Activated T-helper 1 cell treated with anti-CD3 and anti-CD28 coated beads, Interleukin-12 subunit alpha, Interleukin-12 subunit beta, Interleukin-2, Interleukin-4 antibody, amounts not matched to agents 30 ng/mL and 10 ng/mL and 1 ng/mL, durations not matched to agents 14 hours and 24 hours and 36 hours (primary cell): ENCODE measurements at regions of chr16 and their contacts with region 1.

Region 1: DNA sequence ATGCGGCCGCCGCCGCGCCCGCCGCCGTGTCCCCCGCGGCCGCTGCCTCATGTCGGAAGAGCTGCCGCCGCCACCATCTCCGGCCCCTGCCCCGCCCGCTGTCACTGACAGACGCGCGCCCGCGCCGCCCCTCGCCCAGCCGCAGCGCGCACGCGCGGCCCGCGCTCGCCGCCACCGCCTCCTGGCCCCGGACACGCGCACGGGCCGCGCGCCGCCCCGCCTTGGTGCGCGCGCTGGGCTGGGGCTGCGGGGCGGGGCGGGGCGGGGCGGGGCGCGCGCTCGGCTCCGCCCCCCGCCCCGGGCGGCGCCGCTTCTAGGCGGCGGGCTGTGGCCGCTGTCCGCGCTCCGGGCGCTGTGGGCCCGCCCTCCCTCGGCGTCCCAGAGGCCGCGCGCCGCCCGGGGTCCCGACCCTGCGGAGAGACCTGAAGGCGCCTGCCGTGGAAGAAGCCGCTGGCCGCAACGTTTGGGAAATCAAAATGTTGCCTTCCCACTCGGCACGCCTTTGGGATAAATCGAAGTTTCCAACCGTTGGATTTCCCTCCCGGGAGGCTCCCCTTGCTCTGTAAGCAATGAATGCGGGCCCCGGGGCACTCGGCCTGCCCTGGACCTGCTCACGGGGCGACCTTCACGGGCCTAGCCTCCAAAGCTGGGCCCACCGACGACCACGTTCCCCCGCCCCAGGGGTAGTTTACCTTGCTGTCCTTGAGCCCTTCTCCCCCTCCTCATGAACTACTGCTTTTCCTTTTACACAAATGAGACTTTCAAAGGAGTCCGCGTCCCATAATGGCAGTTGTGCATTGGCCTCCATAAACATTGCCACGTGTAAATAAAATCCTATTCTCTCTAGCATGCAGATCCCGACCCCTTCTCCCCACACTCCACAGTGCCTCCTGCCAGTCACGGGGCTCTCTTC is at the start of gene ADCY9:
- DNase-seq: peak; percentile 84
- H3K4me3 Mint-ChIP-seq: peak within 1 kb of the TSS; percentile 82
- H3K27ac Mint-ChIP-seq: peak within 1 kb of the TSS; percentile 64
- H3K4me1 Mint-ChIP-seq: peaks cover 41% of the 10 kb centered on the region
- H3K27me3 Mint-ChIP-seq: peaks cover 14% of the 10 kb centered on the region
- total RNA-seq, gene ADCY9: 9.4 and 9.7 TPM in 2 replicates

Region 2: DNA sequence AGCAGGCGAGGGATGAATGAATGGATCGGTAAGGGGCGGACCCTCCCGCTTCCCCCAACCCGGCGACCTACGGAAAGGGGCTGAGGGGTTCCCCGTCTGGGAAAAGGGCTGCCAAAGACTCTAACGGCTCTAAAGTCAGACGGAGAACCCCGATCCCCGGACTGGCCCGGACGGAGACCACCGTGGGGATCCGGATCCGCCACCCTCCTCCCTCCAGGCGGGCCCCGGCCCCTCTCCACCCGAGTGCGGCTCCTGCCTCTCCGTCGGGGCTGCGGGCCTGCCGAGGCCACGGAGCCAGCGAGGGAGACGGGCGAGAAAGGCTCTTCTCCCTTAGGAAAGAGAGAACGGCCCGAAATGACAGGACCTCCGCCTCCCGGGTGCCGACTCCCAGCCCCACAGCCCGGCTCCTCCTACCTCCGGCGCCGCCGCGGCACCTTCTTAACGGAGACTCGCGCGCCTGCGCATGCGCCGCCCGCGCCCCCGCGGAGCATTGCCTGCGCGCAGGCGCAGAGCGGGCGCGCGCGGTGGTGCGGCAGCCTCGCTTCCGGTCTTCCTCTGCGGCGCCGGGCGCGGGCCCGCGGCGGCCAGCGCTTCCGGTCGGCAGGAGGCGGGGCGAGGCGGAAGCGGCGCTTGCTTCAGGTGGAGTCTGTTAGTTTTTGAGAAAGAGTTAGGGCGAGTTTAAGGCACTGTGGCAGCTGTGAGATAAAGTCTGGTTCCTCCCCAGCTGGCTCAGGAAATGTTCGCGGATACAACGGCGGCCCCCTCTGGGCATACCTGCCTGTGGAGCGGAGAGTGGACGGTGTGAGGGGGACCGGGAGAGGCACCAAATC is 505.2 kb before region 1 on chr16 and contains the start of gene SLX4:
- intact Hi-C with region 1: loop called (anchors 1 kb)
- DNase-seq: peak; percentile 93
- H3K4me3 Mint-ChIP-seq: peak within 1 kb of the TSS; percentile 98
- H3K27ac Mint-ChIP-seq: peak within 1 kb of the TSS; percentile 97
- H3K4me1 Mint-ChIP-seq: peaks cover 52% of the 10 kb centered on the region
- H3K27me3 Mint-ChIP-seq: no peaks in the 10 kb centered on the region
- total RNA-seq, gene SLX4: 10.3 and 10.8 TPM in 2 replicates

Region 3: DNA sequence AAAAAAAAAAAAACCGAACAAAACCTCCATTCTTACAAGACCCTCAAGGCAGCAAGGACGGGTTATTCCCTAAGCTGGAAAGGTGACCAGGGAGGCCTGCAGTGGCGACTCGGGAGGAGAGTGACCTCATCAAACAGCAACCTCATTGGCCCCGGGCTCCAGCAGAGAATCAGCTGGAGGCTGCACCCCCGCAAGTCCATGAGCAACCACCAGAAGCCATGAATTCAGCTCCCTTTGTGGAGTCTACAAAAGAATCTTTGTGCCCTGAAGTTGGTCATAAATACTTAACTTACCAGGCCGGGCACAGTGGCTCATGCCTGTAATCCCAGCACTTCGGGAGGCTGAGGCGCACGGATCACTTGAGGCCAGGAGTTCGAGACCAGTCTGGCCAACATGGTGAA is 155.1 kb before region 1 on chr16:
- intact Hi-C with region 1: loop called (anchors 10 kb)
- DNase-seq: no peak
- H3K4me3 Mint-ChIP-seq: no peak overlapping the region
- H3K27ac Mint-ChIP-seq: no peak overlapping the region
- H3K4me1 Mint-ChIP-seq: peaks cover 25% of the 10 kb centered on the region
- H3K27me3 Mint-ChIP-seq: peaks cover 9% of the 10 kb centered on the region

Region 4: DNA sequence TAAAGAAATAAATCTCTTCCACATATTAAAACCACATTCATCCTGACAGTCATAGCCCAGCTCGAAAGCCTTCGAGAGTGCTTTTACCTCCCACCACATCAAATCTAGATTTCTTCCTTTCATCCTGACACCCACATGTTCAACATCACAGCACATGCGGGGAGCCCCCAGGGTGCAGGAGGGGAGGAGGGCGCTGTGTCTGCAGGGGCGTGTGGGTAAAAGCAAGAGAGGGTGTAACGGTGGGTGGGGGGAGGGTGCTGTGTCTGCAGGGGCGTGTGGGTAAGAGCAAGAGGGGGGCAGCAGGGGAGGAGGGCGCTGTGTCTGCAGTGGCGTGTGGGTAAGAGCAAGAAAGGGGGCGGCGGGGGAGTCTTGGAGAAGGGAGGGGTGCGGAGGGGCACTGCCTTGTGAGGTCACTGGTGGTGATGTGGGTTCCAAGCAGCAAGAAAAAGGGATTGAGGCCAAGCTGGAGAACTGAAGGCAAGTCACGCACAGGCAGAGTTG is 35.0 kb before region 1 on chr16:
- intact Hi-C with region 1: loop called (anchors 2 kb)
- DNase-seq: no peak
- H3K4me3 Mint-ChIP-seq: peak overlapping the region; percentile 54
- H3K27ac Mint-ChIP-seq: no peak overlapping the region
- H3K4me1 Mint-ChIP-seq: peaks cover 56% of the 10 kb centered on the region
- H3K27me3 Mint-ChIP-seq: no peaks in the 10 kb centered on the region

Region 5: DNA sequence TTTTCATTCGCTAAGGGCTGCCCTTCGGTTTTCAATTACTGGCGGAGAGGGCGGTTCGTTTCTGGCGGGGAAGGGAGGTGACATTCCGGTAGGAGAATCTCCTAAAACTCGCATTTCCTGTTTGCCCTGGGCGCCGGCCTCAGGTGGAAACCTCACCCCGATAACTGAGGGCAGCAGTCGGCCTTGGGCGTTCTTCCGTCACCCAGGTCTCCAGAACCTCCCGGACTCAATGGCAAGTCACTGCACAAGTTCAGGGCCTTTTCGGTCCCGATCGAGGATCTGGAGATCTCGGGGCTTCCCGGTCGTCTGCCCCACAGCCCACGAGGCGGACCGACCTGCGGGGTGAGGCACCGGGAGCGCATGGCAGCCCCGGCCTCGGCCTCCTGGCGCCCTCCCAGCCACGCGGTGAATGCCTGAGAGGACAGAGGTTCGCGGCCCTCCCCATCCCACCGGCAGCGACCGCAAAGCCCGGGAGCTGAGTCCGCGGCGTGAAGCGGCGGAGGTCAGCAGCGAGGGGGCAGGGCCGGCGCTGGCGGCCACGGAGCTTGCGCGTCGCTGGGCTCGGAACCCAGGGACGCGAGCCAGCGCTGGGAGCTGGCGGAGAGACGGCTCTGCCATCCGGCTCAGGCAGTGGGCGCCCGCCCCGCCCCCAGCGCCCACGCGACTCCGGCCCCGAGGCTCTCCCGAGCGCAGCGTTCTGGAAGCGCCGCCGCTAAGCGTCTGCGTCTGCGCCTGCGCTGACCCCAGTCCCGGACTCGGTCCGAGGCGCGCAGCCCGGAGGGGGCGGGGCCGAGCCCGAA is 66.8 kb after region 1 on chr16:
- intact Hi-C with region 1: loop called (anchors 1 kb)
- DNase-seq: peak; percentile 92
- H3K4me3 Mint-ChIP-seq: peak overlapping the region; percentile 80
- H3K27ac Mint-ChIP-seq: peak overlapping the region; percentile 80
- H3K4me1 Mint-ChIP-seq: peaks cover 5% of the 10 kb centered on the region
- H3K27me3 Mint-ChIP-seq: peaks cover 12% of the 10 kb centered on the region

Region 6: DNA sequence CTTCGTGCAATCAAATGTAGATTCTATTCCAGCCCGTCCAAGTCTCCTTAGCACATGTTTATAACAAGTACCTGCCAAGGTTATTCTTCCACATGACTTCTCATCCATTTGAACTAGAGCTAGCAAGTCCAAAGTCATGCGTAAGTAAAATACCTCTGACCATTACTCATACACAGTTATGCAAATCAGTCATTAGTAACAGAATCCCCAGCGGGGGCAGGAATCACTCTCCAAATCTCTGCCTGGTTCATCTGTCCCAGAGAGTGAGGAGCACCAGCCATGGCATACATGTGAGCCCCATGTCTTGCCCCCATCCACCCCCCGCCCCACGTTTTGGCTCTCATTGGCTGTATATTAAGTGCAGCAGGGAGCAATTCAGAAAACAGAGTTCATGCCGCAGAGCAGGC is 97.6 kb after region 1 on chr16:
- intact Hi-C with region 1: no loop called
- DNase-seq: no peak
- H3K4me3 Mint-ChIP-seq: no peak overlapping the region
- H3K27ac Mint-ChIP-seq: no peak overlapping the region
- H3K4me1 Mint-ChIP-seq: no peaks in the 10 kb centered on the region
- H3K27me3 Mint-ChIP-seq: peaks cover 12% of the 10 kb centered on the region

Region 7: DNA sequence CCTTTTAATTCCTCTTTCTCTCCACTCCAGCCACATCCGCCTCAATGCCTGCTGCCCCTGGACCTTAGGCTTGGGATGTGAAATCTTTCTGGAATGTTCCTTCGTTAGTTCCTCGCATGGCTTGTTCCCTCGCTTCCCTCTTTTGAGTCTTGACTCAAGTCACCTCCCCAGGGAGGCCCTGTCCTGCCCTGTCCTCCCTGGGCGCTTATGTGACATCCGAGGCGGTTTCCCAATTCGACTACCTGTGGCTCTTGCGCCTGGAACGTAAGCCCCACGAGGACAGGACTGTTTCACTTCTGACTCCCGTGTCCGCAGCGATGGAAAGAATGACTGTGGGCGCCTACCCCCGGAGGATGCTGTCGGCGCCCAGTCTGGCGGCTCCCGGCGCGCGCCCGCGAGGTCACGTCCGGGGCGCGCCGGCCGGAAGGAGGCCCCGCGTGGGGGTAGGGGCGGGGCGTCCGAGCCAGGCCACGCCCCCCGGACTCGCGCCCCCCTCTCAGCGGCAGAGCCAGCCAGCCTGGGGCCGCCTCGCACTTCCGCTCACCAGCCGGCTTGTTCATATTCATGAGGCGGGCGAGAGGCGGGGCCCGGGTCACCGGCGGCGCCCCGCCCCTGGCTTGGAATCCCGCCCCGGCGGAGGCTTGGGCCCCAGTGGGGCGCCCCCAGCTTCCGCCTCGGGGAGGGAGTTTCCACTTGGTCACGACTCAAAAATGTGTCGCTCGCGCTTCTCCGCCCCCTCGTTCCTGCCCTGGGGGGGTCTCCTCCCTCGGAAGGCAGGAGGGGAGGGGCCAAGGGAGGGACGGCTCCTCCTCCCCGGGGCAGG is 190.8 kb after region 1 on chr16:
- intact Hi-C with region 1: loop called (anchors 5 kb)
- DNase-seq: peak; percentile 97
- H3K4me3 Mint-ChIP-seq: peak overlapping the region; percentile 96
- H3K27ac Mint-ChIP-seq: peak overlapping the region; percentile 96
- H3K4me1 Mint-ChIP-seq: peaks cover 22% of the 10 kb centered on the region
- H3K27me3 Mint-ChIP-seq: peaks cover 6% of the 10 kb centered on the region